Pancreas (tissue), 10 donors: ENCODE measurements at regions of chr7 and their contacts with region 1.

Region 1: GRCh38 chr7:74061840-74062539 is 21.6 kb upstream of the LIMK1 start:
- DNase-seq: peak; percentile 83 to 94 (median 93)
- ATAC-seq: peak; percentile 82 to 91 (median 84)
- H3K4me3 ChIP-seq: peak overlapping the region in 3 of 4 donors; percentile 6 to 37 (median 20)
- H3K27ac ChIP-seq: peak overlapping the region; percentile 94 to 98 (median 96)
- H3K4me1 ChIP-seq: peaks cover 23 to 30% (median 25%) of the 10 kb centered on the region in 3 donors
- H3K27me3 ChIP-seq: no peaks in the 10 kb centered on the region
- CTCF ChIP-seq: no peak

Region 2: DNA sequence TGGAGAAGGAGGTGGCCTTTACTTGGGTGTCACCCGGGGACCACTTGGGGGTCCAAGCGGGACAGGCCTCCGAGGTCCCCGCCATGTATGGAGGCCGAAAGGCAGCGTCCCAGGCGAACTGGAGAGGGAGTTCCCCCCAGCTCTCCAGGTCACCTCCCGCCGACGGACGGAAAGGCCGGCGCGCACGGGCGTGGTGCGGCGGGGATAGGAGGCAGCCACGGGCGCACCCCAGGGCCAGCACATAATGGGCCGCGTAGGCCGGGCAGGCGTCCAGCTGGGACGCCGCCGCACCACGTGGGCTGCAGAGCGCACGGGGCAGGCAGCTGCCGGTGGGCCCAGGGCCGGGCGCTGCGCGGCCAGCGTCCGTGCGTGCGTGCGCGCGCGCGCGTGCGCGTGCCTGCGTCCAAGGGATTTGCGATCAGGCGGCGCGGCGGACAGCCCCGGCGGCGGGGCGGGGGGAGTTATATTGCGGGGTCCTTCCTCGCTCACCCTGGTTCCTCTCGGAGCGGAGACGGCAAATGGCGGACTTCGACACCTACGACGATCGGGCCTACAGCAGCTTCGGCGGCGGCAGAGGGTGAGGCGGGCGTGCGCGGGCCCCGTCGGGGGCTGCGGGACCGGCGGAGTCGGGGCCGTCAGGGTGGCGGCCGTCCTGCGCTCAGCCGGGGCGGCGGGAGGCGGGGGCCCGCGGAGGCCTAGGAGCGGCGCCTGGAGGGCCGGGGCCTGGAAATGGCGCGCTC is 112.0 kb after region 1 on chr7 and contains the start of gene EIF4H:
- intact Hi-C with region 1: loop called in 1 of 3 experiments (anchors 10 kb)
- DNase-seq: peak; percentile 95 to 99 (median 98)
- ATAC-seq: peak; percentile 87 to 94 (median 92)
- H3K4me3 ChIP-seq: peak within 1 kb of the TSS; percentile 82 to 100 (median 92)
- H3K27ac ChIP-seq: peak within 1 kb of the TSS; percentile 87 to 93 (median 92)
- H3K4me1 ChIP-seq: peaks cover 33 to 47% (median 40%) of the 10 kb centered on the region in 3 donors
- H3K27me3 ChIP-seq: no peaks in the 10 kb centered on the region
- CTCF ChIP-seq: no peak
- total RNA-seq, gene EIF4H: 128 to 195 (median 135) TPM

Region 3: DNA sequence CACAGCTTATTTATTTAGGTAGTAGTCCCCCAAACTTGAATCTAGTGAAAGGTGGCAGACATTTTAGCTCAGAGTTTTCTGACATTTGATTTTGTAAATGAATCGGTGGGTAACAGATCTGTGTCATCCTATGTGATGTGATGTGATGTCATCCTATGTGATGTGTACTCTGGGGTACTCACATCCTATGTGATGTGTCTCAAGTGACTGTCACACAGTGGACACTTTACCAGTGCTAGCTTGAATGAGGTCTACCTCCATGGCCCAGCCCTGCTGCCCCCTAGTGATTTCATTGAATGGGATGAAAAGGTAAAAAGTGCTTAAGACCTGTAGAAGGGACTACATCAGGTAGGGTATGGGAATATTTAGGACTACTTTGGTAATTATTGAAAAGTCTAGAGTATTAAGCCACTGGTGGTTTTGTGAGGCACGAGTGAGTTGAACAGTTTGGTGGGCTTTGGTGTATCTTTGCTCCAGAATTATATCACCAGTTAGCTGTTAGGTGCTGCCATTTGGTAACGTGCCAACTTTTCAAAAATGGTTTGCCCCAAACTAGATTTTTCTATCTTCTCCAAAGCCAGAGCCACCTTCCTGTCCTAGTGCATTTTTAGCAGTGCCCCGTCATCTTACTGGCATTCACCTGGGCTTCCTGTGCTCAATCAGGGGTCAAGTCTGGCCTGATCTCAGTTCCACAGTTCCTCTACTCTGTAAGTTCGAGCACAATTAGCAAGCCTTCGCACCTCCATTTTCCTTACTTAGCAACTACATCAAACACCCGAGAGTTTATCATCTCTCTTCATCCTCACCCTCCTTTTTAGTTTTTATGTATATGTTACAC is 121.8 kb after region 1 on chr7:
- intact Hi-C with region 1: loop called in 2 of 3 experiments (anchors 10 kb)
- DNase-seq: no peak
- ATAC-seq: peak in 3 of 4 donors; percentile 11 to 47 (median 19)
- H3K4me3 ChIP-seq: no peak overlapping the region
- H3K27ac ChIP-seq: peak overlapping the region in 1 of 4 donors; percentile 25
- H3K4me1 ChIP-seq: peaks cover 54 to 66% (median 59%) of the 10 kb centered on the region in 3 donors
- H3K27me3 ChIP-seq: no peaks in the 10 kb centered on the region
- CTCF ChIP-seq: no peak

Region 4: GRCh38 chr7:74240482-74240881 is 178.5 kb after region 1 on chr7:
- intact Hi-C with region 1: no loop called
- DNase-seq: peak in 2 of 6 donors; percentile 38 to 48
- ATAC-seq: peak; percentile 45 to 67 (median 58)
- H3K4me3 ChIP-seq: no peak overlapping the region
- H3K27ac ChIP-seq: no peak overlapping the region
- H3K4me1 ChIP-seq: no peaks in the 10 kb centered on the region
- H3K27me3 ChIP-seq: no peaks in the 10 kb centered on the region
- CTCF ChIP-seq: no peak